ENCODE measurements at regions of chr2 and their contacts with region 1.

Region 1: DNA sequence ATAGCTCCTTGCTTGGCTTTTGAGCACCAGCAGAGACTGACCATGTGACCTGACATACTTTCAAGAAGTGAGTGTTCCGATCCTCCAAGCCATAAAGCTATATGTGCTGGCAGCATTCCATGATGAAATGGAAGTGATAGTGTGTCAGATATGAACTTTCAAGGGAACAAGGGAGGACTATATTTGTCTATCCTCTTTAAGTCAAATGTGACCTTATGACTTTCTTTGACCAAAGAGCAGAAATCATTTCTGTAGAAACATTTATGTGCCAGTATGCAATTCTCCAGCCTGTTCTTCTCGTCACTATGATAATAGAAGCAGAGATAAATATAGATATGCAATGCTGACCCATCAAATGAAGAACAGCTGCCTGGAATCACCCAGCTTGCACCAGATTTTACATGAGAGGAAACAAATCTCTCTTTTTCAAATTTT is 14.4 kb downstream of the HYCC2 start:
- DNase-seq: no peak
- ATAC-seq: no peak
- H3K4me3 Mint-ChIP-seq: no peak overlapping the region
- H3K27ac Mint-ChIP-seq: no peak overlapping the region
- H3K4me1 Mint-ChIP-seq: peaks cover 17% of the 10 kb centered on the region
- H3K27me3 Mint-ChIP-seq: no peaks in the 10 kb centered on the region

Region 2: GRCh38 chr2:201040867-201041628 is 16.1 kb before region 1 on chr2:
- CTCF ChIA-PET with region 1: interaction called, 12 read pairs
- POLR2A ChIA-PET with region 1: interaction called, 4 read pairs
- intact Hi-C with region 1: no loop called
- DNase-seq: no peak
- ATAC-seq: no peak
- H3K4me3 Mint-ChIP-seq: no peak overlapping the region
- H3K27ac Mint-ChIP-seq: no peak overlapping the region
- H3K4me1 Mint-ChIP-seq: peaks cover 4% of the 10 kb centered on the region
- H3K27me3 Mint-ChIP-seq: no peaks in the 10 kb centered on the region